ENCODE measurements at regions of chr2 and their contacts with region 1.

Region 1: GRCh38 chr2:216498418-216499413 is at the start of gene RPL37A:
- DNase-seq: peak; percentile 80 to 94 (median 86)
- ATAC-seq: peak; percentile 92 to 93
- H3K4me3 Mint-ChIP-seq: peak within 1 kb of the TSS; percentile 96 to 100 (median 98)
- H3K27ac Mint-ChIP-seq: peak within 1 kb of the TSS; percentile 91 to 98 (median 96)
- H3K4me1 Mint-ChIP-seq: peaks cover 17 to 63% (median 52%) of the 10 kb centered on the region in 4 donors
- H3K27me3 Mint-ChIP-seq: no peaks in the 10 kb centered on the region
- polyA plus RNA-seq, gene RPL37A: 4,502 to 5,032 (median 4,635) TPM

Region 2: DNA sequence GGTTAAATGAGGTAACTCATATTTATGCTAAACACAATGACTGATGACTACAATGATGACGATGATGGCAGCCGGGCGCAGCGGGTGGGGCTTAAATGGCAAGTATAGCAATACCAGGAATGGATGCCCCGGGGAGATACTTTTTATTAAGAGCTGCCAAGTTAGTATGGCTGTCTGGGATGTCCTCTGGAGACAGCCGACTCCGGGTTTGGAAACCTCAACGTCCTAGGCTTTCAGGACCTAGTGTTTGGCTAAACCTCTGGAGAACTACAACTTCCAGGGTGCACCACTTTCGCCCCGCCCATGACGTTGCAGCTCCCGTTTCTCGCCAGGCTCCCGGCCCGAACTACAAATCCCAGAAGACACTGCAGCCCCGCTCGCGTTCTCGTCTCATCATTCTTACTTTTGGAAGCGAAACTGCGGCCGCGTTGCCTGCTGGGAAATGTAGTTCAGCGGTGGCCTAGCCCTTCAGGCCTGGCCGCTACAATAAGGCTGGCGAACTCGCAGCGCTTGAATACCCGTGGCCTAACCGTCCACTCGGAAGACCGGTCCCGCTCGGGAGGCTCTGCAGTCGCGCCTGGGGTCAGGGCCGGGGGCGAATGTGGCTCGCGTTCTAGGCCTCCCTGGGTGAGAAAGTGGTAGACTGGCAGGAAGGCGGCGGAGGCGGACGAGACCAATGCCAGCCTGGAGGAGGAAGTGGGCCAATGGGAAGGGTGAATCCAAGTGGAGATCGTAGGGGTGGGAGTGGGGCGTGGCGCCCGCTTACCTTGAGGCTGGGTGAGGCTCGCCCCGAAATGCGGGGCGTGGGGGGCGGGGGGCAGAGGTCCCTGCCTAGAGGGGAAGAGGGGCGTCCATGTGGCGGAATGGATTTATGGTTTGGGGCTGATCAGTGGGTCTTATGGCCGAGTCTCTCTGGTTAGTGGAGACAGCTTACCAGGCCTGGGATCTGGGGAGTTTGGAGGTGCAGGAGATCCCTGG is 86.4 kb before region 1 on chr2 and contains the start of gene SMARCAL1:
- POLR2A ChIA-PET with region 1: interaction called, 16 read pairs
- DNase-seq: peak; percentile 92 to 99 (median 97)
- ATAC-seq: peak; percentile 89 to 94
- H3K4me3 Mint-ChIP-seq: peak within 1 kb of the TSS; percentile 96 to 100 (median 97)
- H3K27ac Mint-ChIP-seq: peak within 1 kb of the TSS; percentile 94 to 98 (median 97)
- H3K4me1 Mint-ChIP-seq: peaks cover 9 to 26% (median 23%) of the 10 kb centered on the region in 4 donors
- H3K27me3 Mint-ChIP-seq: peaks cover 0 to 3% (median 0%) of the 10 kb centered on the region in 5 donors
- polyA plus RNA-seq, gene SMARCAL1: 18.7 to 22.0 (median 19.4) TPM

Measured in naive thymus-derived CD8-positive, alpha-beta T cell (primary cell).